ENCODE measurements at regions of chr6 and their contacts with region 1.

Region 1: DNA sequence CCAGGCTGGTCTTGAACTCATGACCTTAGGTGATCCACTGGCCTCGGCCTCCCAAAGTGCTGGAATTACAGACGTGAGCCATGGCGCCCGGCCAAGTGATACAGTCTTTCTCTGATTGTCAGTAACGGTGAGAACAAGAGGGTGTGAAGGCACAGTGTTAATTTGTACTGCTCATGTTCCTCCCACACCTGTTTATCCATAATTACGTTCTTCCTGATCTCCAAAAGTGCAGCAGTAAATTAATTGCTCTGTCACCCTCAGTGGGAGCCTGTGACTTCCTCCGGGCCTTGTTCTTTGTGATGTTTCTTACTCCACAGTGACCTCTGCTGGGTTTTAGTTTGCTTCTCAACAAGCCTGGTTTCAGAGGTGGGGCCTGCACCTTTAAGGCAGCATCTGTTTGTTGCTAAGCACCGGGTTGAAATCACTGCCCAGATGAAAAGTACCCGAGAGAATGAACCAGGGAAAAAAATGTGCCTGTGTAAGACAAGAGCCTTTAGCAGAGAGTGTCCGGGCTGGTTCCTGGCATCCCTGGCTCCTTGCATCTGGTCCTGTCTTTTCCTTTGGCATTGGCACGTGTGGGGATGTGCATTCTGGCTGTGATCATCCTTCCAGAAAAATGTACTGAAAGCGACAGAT is 89.1 kb upstream of the CLDN20 start:
- DNase-seq: peak; percentile 45
- ATAC-seq: peak; percentile 86

Region 2: GRCh38 chr6:154815938-154816820 is 358.5 kb before region 1 on chr6:
- intact Hi-C with region 1: no loop called
- DNase-seq: no peak
- ATAC-seq: no peak

Region 3: DNA sequence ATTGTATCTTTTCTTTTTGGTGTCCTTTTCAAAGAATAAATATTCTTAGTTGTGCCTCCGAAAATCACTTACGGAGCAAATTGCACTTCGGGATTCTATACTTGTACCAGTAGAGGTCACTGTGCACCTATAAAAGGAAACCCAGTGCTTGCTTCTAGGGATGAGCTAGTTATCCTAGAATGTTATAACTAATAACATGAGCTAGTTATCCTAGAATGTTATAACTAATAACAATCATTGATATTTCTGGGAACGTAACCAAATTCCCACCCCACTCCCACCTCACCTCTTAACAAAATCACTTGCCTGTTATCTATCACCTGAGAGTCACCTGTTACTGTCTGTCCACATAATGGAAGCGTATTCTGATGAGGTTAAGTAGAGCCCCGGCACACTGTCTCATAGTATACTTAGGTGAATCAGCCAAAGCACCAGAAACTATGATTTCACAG is 306.5 kb before region 1 on chr6:
- intact Hi-C with region 1: loop called (anchors 5 kb)
- DNase-seq: no peak
- ATAC-seq: peak; percentile 46

Region 4: DNA sequence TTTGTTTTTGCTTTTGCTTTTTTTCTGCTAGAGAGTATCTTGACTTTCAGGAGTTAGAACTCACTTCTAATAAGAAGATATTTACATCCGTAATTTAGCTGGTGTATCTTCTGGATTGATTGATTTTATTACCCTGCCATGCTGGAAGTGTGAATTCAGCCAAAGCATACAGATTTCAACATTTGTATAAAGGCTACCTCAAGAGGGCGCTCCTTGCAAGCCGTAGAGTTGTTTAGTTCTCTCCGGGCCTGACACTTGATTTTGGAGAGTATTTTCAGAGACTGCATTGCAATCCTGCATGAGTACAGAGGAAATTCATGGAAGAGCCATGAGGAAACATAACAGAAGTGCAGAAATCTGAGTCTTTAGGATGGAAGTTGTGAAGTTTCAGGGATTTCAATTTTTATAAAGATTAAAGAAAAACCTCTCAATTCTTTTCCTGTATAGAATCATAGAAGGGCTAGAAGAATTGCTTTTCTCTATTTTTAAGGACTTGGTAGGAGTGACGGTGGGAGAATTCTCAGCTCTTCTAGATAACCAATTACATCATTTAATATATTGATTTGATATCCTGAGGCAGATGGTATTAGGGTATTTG is 246.3 kb before region 1 on chr6:
- intact Hi-C with region 1: loop called (anchors 10 kb)
- DNase-seq: no peak
- ATAC-seq: peak; percentile 53

Region 5: DNA sequence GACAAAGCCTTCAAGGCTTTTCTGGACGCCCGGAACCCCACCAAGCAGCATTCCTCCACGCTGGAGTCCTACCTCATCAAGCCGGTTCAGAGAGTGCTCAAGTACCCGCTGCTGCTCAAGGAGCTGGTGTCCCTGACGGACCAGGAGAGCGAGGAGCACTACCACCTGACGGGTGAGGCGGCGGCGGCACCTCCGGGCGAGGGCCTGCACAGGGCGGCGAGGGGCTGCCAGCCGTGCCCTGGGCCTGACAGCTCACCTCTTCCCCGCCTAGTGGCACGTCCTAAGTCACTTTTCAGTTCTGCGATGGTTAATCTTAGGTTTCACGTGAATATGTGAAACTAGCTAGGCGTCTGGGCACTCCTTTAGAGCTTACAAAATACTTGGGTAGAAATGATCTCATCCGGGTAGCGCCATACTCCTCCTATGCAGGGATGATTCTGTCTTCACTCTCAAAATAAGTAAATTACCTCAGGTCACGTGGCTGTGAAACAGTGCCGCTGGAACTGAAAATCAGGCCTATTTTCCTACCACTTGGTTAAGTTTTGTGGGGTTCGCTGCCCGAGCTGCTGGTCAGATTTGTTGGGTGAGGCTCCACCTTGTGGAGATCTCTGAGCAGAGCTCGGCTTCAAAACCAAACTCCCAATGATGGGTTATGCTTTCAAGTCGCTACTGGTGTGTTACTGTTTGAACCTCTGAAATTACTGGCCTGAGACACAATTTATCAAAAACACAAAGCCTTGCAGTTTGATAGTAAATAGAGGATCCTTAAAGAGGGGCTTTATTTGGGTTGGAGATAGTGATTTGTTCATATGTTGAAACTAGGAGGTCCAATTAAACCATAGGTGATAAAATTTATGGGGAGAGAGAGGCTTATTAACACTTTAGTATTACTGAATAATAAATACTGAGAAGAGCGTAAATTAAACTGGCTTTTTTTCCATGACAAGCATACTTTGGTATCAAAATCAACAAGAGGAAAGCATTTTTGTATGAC is 73.6 kb after region 1 on chr6:
- intact Hi-C with region 1: loop called (anchors 5 kb)
- DNase-seq: no peak
- ATAC-seq: peak; percentile 41

Region 6: DNA sequence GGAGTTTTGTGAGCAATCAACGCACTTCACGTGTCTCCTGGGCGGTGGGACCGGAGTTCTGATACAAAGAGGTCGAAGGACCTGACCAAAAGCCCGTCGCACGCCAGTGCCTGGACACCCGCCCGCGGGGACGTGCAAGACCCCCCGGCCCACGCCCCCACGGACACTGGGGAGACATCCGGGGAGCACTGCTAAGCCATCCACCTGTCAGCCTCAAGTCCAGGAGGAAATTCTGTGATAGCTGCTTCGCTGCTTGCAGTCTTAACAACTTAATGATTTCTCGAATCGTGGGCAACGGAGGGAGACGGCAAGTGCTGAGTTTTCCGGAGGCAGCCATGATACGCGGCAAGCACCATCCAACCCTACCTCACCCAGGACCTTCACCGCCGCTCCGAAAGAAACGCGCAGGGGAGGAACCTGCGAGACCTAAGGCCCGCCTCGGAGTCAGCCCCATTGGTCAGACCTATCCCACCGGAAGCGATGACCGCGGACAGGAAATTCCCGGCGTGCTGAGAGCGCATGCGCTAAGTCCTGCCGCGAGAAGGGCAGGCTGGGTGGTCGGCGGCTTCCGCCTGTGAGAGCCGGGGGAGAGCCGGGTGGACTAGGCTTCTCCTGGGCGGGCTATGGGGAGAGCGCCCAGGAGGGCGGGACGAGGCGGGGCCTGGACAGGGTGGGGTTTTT is 139.5 kb after region 1 on chr6 and contains the start of gene TFB1M:
- intact Hi-C with region 1: loop called (anchors 5 kb)
- DNase-seq: peak; percentile 99
- ATAC-seq: peak; percentile 98
- total RNA-seq, gene TFB1M: 16.8 TPM